CD4-positive, alpha-beta memory T cell (primary cell): ENCODE measurements at regions of chr2 and their contacts with region 1.

Region 1: DNA sequence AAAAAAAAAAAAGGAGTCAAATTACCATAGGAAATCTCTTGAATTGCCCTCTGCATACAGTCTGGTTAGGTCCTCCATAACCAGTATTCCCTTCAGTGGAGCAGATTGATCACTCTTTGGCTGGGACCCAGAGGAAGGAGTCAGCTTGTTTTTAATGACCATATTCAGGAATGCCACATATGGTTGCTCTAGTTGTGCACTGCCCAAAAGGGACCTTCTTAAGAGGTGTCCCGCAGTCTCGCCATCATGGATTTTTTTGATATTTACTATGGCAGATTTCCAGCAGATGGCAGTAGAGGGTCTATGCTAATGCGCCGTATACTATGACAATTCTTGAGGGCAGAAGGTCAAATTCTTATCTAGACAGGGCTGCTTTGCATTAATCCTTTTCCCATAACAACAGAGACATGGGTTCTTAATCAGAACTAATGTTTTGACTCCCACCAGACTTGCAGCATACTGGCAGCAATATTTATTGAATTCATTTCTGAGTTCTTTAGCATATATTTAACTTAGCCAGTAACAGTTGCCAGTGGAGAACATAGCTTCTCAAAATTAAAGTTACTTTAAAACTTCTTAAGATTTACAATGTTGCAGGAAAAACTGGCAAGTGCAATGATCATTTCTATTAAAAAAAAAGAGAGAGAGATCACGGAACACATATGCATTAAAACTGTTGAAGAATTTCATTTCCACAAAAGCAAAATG is 31.8 kb upstream of the INPP4A start:
- DNase-seq: peak; percentile 57 to 78 (median 72)
- H3K4me3 ChIP-seq: no peak overlapping the region
- H3K4me3 Mint-ChIP-seq: no peak overlapping the region
- H3K27ac ChIP-seq: no peak overlapping the region
- H3K27ac Mint-ChIP-seq: peak overlapping the region in 1 of 7 donors; percentile 82
- H3K4me1 ChIP-seq: peaks cover 6% of the 10 kb centered on the region
- H3K4me1 Mint-ChIP-seq: peaks cover 0 to 6% (median 4%) of the 10 kb centered on the region in 4 donors
- H3K27me3 ChIP-seq: no peaks in the 10 kb centered on the region
- H3K27me3 Mint-ChIP-seq: no peaks in the 10 kb centered on the region

Region 2: GRCh38 chr2:98394595-98395153 is 18.2 kb before region 1 on chr2:
- CTCF ChIA-PET with region 1: no interaction called
- POLR2A ChIA-PET with region 1: no interaction called
- intact Hi-C with region 1: no loop called
- DNase-seq: no peak
- H3K4me3 ChIP-seq: no peak overlapping the region
- H3K4me3 Mint-ChIP-seq: no peak overlapping the region
- H3K27ac ChIP-seq: no peak overlapping the region
- H3K27ac Mint-ChIP-seq: peak overlapping the region in 1 of 7 donors; percentile 3
- H3K4me1 ChIP-seq: no peaks in the 10 kb centered on the region
- H3K4me1 Mint-ChIP-seq: no peaks in the 10 kb centered on the region
- H3K27me3 ChIP-seq: no peaks in the 10 kb centered on the region
- H3K27me3 Mint-ChIP-seq: peaks cover 14 to 16% of the 10 kb centered on the region in 2 donors

Region 3: DNA sequence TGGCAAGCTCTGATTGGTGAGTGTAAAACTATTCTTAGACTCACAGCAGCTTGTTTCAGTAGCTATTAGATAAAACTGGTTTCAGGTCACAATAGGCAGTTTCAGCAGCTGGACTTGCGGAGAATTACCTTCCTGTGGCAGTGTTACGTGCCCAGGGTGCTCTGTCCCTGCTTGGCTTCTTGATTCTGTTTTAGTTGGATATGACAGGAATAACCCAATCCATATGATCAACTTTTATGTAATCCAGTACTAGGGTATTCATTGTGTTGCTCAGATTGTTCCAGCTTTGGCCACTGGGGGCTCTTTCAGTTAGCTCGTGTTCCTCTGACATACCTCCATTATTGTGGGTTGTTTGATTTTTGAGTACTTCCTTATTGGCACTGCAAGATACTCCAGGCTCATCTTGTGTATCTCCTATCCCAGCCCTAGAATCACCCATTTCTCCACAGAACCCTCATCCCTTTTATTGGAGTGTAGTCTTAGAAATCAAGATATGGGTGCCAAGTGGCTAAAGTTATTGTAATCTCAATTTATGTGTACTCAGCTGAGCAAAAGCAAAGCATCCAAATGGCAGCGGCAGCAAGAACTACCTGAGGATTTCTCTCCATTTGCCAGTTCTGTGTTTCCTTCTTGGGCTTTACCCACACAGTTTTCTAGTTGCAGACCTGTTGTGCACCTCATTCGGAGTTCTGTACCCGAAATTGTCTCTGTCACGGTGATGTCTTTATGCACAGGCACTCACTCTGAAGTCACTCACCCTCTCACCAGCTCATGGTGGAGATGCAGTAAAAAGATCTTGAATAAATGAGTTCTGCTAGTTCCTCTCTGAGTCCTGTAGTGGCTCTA is 75.1 kb after region 1 on chr2:
- CTCF ChIA-PET with region 1: interaction called, 5 read pairs
- POLR2A ChIA-PET with region 1: no interaction called
- intact Hi-C with region 1: loop called (anchors 2 kb)
- DNase-seq: peak in 4 of 5 donors; percentile 52 to 58 (median 56)
- H3K4me3 ChIP-seq: no peak overlapping the region
- H3K4me3 Mint-ChIP-seq: peak overlapping the region in 6 of 8 donors; percentile 3 to 61 (median 46)
- H3K27ac ChIP-seq: no peak overlapping the region
- H3K27ac Mint-ChIP-seq: peak overlapping the region; percentile 32 to 81 (median 70)
- H3K4me1 ChIP-seq: peaks cover 84% of the 10 kb centered on the region
- H3K4me1 Mint-ChIP-seq: peaks cover 74 to 100% (median 85%) of the 10 kb centered on the region in 4 donors
- H3K27me3 ChIP-seq: no peaks in the 10 kb centered on the region
- H3K27me3 Mint-ChIP-seq: no peaks in the 10 kb centered on the region

Region 4: DNA sequence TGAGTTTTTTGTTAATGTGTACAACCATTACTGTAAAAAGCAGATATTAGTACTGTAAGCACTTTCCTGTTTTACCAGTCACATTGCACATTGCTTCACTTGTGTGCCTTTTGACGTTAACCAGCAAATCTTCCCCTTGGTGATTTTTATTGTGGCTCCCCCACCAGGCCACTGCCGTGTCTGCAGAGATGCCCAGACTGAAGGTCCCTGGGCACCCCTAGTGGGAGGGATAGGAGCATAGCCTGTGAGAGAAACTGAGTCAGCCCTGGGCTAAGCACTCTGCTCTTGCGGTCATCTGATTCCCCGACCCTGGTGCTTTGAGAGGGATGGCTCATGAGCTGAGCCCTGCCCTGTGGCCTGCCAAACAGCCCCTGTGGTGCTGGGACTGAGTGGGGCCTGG is 105.2 kb after region 1 on chr2:
- CTCF ChIA-PET with region 1: interaction called, 44 read pairs
- POLR2A ChIA-PET with region 1: no interaction called
- intact Hi-C with region 1: loop called (anchors 1 kb)
- DNase-seq: peak; percentile 55 to 65 (median 61)
- H3K4me3 ChIP-seq: no peak overlapping the region
- H3K4me3 Mint-ChIP-seq: no peak overlapping the region
- H3K27ac ChIP-seq: no peak overlapping the region
- H3K27ac Mint-ChIP-seq: peak overlapping the region in 5 of 7 donors; percentile 19 to 70 (median 45)
- H3K4me1 ChIP-seq: peaks cover 54% of the 10 kb centered on the region
- H3K4me1 Mint-ChIP-seq: peaks cover 38 to 58% (median 50%) of the 10 kb centered on the region in 4 donors
- H3K27me3 ChIP-seq: no peaks in the 10 kb centered on the region
- H3K27me3 Mint-ChIP-seq: no peaks in the 10 kb centered on the region

Region 5: GRCh38 chr2:98528349-98528748 is 115.4 kb after region 1 on chr2:
- CTCF ChIA-PET with region 1: interaction called, 12 read pairs
- POLR2A ChIA-PET with region 1: no interaction called
- intact Hi-C with region 1: no loop called
- DNase-seq: no peak
- H3K4me3 ChIP-seq: no peak overlapping the region
- H3K4me3 Mint-ChIP-seq: no peak overlapping the region
- H3K27ac ChIP-seq: no peak overlapping the region
- H3K27ac Mint-ChIP-seq: peak overlapping the region in 4 of 7 donors; percentile 16 to 79 (median 50)
- H3K4me1 ChIP-seq: no peaks in the 10 kb centered on the region
- H3K4me1 Mint-ChIP-seq: peaks cover 9 to 11% (median 10%) of the 10 kb centered on the region in 4 donors
- H3K27me3 ChIP-seq: no peaks in the 10 kb centered on the region
- H3K27me3 Mint-ChIP-seq: no peaks in the 10 kb centered on the region

Region 6: GRCh38 chr2:98601532-98602132 is 188.7 kb after region 1 on chr2:
- CTCF ChIA-PET with region 1: interaction called, 3 read pairs
- POLR2A ChIA-PET with region 1: interaction called, 3 read pairs
- intact Hi-C with region 1: loop called (anchors 1 kb)
- DNase-seq: no peak
- H3K4me3 ChIP-seq: no peak overlapping the region
- H3K4me3 Mint-ChIP-seq: no peak overlapping the region
- H3K27ac ChIP-seq: no peak overlapping the region
- H3K27ac Mint-ChIP-seq: peak overlapping the region in 5 of 7 donors; percentile 55 to 77 (median 75)
- H3K4me1 ChIP-seq: peaks cover 21% of the 10 kb centered on the region
- H3K4me1 Mint-ChIP-seq: peaks cover 24 to 35% (median 27%) of the 10 kb centered on the region in 4 donors
- H3K27me3 ChIP-seq: no peaks in the 10 kb centered on the region
- H3K27me3 Mint-ChIP-seq: no peaks in the 10 kb centered on the region